IMR-90 (cell line): ENCODE measurements at regions of chr4 and their contacts with region 1.

Region 1: GRCh38 chr4:106329041-106329618 is 12.8 kb downstream of the AIMP1 start:
- DNase-seq: peak; percentile 53
- ATAC-seq: peak; percentile 80
- H3K4me3 ChIP-seq: no peak overlapping the region
- H3K27ac ChIP-seq: no peak overlapping the region
- H3K4me1 ChIP-seq: no peaks in the 10 kb centered on the region
- H3K27me3 ChIP-seq: no peaks in the 10 kb centered on the region
- CTCF ChIP-seq: peak; percentile 62
- POLR2A ChIP-seq: no peak
- RAD21 ChIP-seq: peak; percentile 47

Region 2: DNA sequence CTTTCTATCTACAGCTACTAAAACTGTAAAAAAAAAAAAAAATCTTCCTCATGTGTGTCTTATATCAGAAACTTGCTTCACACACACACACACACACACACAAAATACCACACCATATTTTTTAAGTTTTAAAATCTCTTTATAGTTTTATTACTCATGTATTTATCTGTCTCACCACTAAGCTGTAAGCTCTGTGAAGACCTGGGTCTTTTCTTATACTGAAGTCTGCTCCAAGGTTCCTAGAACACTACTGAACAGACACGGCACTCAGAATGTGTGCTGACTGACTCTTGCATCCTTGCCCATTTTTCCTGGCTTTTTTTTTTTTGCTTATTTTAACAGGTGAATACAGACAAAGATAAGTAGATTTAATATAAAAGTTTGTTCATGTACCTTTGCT is 1698.9 kb before region 1 on chr4:
- CTCF ChIA-PET with region 1: no interaction called
- POLR2A ChIA-PET with region 1: no interaction called
- dilution Hi-C with region 1: no loop called
- in situ Hi-C with region 1: no loop called
- intact Hi-C with region 1: loop called (anchors 10 kb)
- DNase-seq: no peak
- ATAC-seq: no peak
- H3K4me3 ChIP-seq: no peak overlapping the region
- H3K27ac ChIP-seq: no peak overlapping the region
- H3K4me1 ChIP-seq: no peaks in the 10 kb centered on the region
- H3K27me3 ChIP-seq: no peaks in the 10 kb centered on the region
- CTCF ChIP-seq: no peak
- POLR2A ChIP-seq: no peak
- RAD21 ChIP-seq: no peak

Region 3: GRCh38 chr4:104829761-104830160 is 1499.4 kb before region 1 on chr4:
- CTCF ChIA-PET with region 1: no interaction called
- POLR2A ChIA-PET with region 1: no interaction called
- dilution Hi-C with region 1: no loop called
- in situ Hi-C with region 1: no loop called
- intact Hi-C with region 1: no loop called
- DNase-seq: no peak
- ATAC-seq: no peak
- H3K4me3 ChIP-seq: no peak overlapping the region
- H3K27ac ChIP-seq: no peak overlapping the region
- H3K4me1 ChIP-seq: no peaks in the 10 kb centered on the region
- H3K27me3 ChIP-seq: no peaks in the 10 kb centered on the region
- CTCF ChIP-seq: no peak
- POLR2A ChIP-seq: no peak
- RAD21 ChIP-seq: no peak

Region 4: DNA sequence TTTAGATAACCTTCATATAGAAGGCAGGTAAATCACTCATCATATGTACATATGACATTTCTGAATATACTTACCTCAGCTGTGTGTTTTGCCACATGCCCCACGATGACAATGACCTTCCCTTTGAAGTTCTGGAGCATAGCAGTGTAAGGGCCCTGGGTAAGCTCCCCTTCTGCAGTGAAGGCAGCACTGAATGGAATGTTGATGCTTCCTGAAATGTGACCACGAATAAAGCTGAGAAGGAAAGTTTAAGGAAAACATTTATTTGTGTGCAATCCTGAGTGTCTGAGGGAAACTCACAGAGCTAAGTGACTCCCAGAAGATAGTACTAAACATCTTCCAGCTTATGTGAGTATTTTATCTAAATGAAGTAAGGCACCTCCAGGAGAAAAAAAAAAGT is 233.7 kb before region 1 on chr4:
- CTCF ChIA-PET with region 1: no interaction called
- POLR2A ChIA-PET with region 1: no interaction called
- dilution Hi-C with region 1: no loop called
- in situ Hi-C with region 1: no loop called
- intact Hi-C with region 1: no loop called
- DNase-seq: peak; percentile 2
- ATAC-seq: peak; percentile 53
- H3K4me3 ChIP-seq: no peak overlapping the region
- H3K27ac ChIP-seq: no peak overlapping the region
- H3K4me1 ChIP-seq: no peaks in the 10 kb centered on the region
- H3K27me3 ChIP-seq: no peaks in the 10 kb centered on the region
- CTCF ChIP-seq: no peak
- POLR2A ChIP-seq: no peak
- RAD21 ChIP-seq: no peak

Region 5: DNA sequence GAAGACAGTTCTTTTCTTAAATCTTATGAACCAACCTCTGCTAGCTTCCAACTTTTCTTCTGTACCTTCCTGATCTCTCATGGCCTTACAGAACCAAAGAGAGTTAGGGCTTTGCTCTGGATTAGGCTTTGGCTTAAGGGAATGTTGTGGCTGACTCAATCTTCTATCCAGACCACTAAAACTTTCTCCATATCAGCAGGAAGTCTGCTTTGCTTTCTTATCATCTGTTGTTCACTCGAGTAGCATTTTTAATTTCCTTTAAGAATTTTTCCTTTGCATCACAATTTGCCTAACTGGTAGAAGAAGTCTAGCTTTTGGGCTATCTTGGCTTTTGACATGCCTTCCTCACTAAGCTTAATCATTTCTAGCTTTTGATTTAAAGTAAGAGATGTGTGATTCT is 180.1 kb before region 1 on chr4:
- CTCF ChIA-PET with region 1: no interaction called
- POLR2A ChIA-PET with region 1: no interaction called
- dilution Hi-C with region 1: no loop called
- in situ Hi-C with region 1: no loop called
- intact Hi-C with region 1: no loop called
- DNase-seq: no peak
- ATAC-seq: no peak
- H3K4me3 ChIP-seq: no peak overlapping the region
- H3K27ac ChIP-seq: no peak overlapping the region
- H3K4me1 ChIP-seq: no peaks in the 10 kb centered on the region
- H3K27me3 ChIP-seq: no peaks in the 10 kb centered on the region
- CTCF ChIP-seq: no peak
- POLR2A ChIP-seq: no peak
- RAD21 ChIP-seq: no peak

Region 6: GRCh38 chr4:106502106-106502699 is 173.1 kb after region 1 on chr4:
- CTCF ChIA-PET with region 1: interaction called, 3 read pairs
- POLR2A ChIA-PET with region 1: no interaction called
- dilution Hi-C with region 1: no loop called
- in situ Hi-C with region 1: no loop called
- intact Hi-C with region 1: loop called (anchors 1 kb)
- DNase-seq: peak; percentile 55
- ATAC-seq: peak; percentile 92
- H3K4me3 ChIP-seq: no peak overlapping the region
- H3K27ac ChIP-seq: no peak overlapping the region
- H3K4me1 ChIP-seq: no peaks in the 10 kb centered on the region
- H3K27me3 ChIP-seq: peaks cover 3% of the 10 kb centered on the region; the same call in 1 of the 2 replicates
- CTCF ChIP-seq: peak; percentile 78
- POLR2A ChIP-seq: no peak
- RAD21 ChIP-seq: peak; percentile 75

Region 7: GRCh38 chr4:106809076-106809475 is 479.9 kb after region 1 on chr4:
- CTCF ChIA-PET with region 1: no interaction called
- POLR2A ChIA-PET with region 1: no interaction called
- dilution Hi-C with region 1: no loop called
- in situ Hi-C with region 1: no loop called
- intact Hi-C with region 1: loop called (anchors 5 kb)
- DNase-seq: peak; percentile 25
- ATAC-seq: 0 out of 2 replicates have a peak, but pooled peaks have one; percentile 51
- H3K4me3 ChIP-seq: no peak overlapping the region
- H3K27ac ChIP-seq: no peak overlapping the region
- H3K4me1 ChIP-seq: no peaks in the 10 kb centered on the region
- H3K27me3 ChIP-seq: no peaks in the 10 kb centered on the region
- CTCF ChIP-seq: peak; percentile 30; the same call in 1 of the 2 replicates
- POLR2A ChIP-seq: no peak
- RAD21 ChIP-seq: peak; percentile 46